GM18951 (cell line): ENCODE measurements at regions of chr15 and their contacts with region 1.

Region 1: GRCh38 chr15:69979783-69980182 is 117.9 kb downstream of the TLE3 start:
- POLR2A ChIP-seq: peak; percentile 37

Region 2: GRCh38 chr15:70014860-70015490 is 35.2 kb after region 1 on chr15:
- in situ Hi-C with region 1: loop called (anchors 5 kb)
- POLR2A ChIP-seq: peak; percentile 61